Activated naive CD4-positive, alpha-beta T cell treated with anti-CD3 and anti-CD28 coated beads, Interleukin-2, amount 10 ng/mL, durations not matched to agents 7 days and 5 days (primary cell): ENCODE measurements at regions of chr6 and their contacts with region 1.

Region 1: GRCh38 chr6:4055420-4056041 is 23.4 kb downstream of the FAM217A start:
- DNase-seq: peak; percentile 27
- H3K4me3 Mint-ChIP-seq: no peak overlapping the region
- H3K27ac Mint-ChIP-seq: no peak overlapping the region
- H3K4me1 Mint-ChIP-seq: peaks cover 29% of the 10 kb centered on the region
- H3K27me3 Mint-ChIP-seq: no peaks in the 10 kb centered on the region

Region 2: GRCh38 chr6:3592371-3592941 is 463.1 kb before region 1 on chr6:
- CTCF ChIA-PET with region 1: no interaction called
- DNase-seq: no peak
- H3K4me3 Mint-ChIP-seq: no peak overlapping the region
- H3K27ac Mint-ChIP-seq: no peak overlapping the region
- H3K4me1 Mint-ChIP-seq: no peaks in the 10 kb centered on the region
- H3K27me3 Mint-ChIP-seq: peaks cover 10% of the 10 kb centered on the region

Region 3: DNA sequence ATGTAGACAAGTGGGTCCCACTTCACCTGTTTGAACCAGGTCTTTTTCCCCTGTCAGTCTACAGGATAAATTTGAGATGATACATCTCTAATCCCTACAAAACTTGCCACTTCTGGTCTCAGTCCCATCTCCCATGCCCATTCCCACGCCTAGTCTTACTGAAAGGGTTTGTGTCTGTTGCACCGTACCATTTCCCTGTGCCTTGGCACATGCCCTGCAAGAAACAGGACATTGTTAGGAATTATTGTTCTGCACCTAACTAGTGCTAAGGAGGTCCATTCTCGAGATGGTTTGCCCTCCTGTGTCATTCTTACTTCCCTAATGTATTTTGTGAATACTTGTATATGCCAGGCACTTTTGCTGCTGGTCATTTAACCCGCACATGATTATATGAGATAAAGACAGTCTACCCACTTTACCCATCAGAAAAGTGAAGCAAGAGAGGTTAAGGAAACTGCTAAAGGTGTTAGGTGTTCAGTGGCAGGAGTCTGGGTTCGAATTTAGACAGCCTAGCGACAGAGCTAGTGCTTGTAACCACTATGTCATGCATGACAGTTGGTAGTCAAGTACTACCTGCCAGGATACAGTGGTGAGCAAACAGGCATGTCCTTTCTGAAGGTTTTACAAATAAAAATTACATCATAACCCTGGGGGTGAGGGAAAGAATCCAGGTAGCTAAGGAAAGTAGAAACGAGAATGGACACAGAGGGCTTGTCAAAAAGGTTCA is 10.7 kb after region 1 on chr6:
- CTCF ChIA-PET with region 1: no interaction called
- DNase-seq: no peak
- H3K4me3 Mint-ChIP-seq: no peak overlapping the region
- H3K27ac Mint-ChIP-seq: no peak overlapping the region
- H3K4me1 Mint-ChIP-seq: no peaks in the 10 kb centered on the region
- H3K27me3 Mint-ChIP-seq: peaks cover 4% of the 10 kb centered on the region

Region 4: DNA sequence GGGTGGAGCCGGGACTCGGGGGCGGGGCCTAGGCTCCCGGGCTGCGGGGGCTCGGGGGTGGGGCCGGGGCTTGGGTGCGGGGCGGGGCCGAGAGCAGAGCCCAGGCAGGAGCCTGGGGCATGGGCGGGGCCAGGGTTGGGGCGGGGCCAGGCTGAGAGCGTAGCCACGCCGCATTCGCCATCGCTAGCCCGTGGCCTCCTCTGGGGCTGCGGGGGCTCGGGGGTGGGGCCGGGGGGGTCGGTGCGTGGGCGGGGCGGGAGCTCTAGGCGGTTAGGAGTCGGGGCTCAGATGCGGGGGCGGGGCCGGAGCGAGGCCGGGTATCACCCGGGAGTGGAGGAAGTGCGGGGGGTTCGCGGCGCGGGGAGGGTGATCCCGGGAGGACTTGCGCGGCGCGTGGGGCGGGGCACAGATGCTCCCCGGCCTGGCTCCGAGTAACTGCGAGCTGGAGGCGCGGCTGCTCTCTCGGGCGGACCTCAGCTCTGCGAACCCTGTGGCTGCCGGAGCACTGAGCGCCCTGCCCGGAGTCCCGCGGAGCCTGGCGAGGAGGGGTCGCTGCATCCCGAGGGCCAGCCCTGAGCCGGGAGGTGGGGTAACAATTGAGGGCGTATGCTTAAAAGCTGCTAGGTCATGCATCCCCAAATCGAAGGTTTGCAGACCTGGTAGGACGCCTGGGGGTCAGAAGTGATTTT is 80.3 kb after region 1 on chr6:
- CTCF ChIA-PET with region 1: interaction called, 13 read pairs
- DNase-seq: peak; percentile 94
- H3K4me3 Mint-ChIP-seq: peak overlapping the region; percentile 79
- H3K27ac Mint-ChIP-seq: peak overlapping the region; percentile 83
- H3K4me1 Mint-ChIP-seq: peaks cover 22% of the 10 kb centered on the region
- H3K27me3 Mint-ChIP-seq: no peaks in the 10 kb centered on the region

Region 5: GRCh38 chr6:4155848-4156466 is 100.4 kb after region 1 on chr6:
- CTCF ChIA-PET with region 1: interaction called, 29 read pairs
- DNase-seq: peak; percentile 86
- H3K4me3 Mint-ChIP-seq: no peak overlapping the region
- H3K27ac Mint-ChIP-seq: no peak overlapping the region
- H3K4me1 Mint-ChIP-seq: peaks cover 5% of the 10 kb centered on the region
- H3K27me3 Mint-ChIP-seq: peaks cover 21% of the 10 kb centered on the region